Left ventricle myocardium superior (tissue), 1 donor: ENCODE measurements at regions of chr17 and their contacts with region 1.

Region 1: DNA sequence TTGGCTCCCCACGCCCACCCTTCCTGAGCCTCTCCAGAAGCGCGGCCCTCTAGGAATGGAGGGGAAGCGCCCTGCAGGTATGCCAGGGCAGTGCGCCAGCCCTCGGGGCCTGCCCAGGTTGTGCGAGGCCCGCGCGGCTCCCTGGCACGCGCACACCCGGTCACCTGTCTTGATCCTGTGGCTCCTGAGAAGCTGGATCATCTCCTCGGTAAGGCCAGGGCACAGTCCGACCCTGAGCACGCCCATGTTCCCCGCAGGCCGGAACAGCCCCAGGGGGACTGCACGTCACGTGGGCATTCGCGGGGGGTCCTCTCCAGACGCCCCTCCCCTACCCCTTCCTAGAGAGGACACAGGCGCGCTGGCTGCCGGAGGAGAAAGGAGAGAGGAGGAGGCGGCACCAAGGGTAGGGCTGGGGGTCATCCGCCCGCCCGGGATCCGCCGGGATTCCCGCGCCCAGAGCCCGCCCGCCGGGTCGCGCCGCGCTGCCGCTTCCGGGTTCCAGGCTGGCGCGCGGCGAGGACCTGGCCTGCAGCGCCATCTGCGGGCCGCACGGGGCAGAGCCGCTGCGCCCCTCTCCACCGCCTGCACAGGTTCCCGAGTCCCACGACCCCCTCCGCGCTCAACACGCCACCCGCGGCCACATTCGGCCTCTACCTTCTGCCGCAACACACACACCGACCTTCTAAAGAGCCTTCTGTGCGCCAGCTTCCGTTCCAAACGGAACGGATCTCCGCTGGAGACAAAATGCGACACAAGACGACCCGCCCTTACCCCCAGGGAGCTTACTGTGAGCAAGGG is at the start of gene RAD51D:
- DNase-seq: peak; percentile 88
- ATAC-seq: peak; percentile 98
- total RNA-seq, gene RAD51D: 6.4 TPM

Region 2: GRCh38 chr17:34542700-34543336 is 576.7 kb before region 1 on chr17:
- intact Hi-C with region 1: loop called (anchors 5 kb)
- DNase-seq: no peak
- ATAC-seq: no peak

Region 3: DNA sequence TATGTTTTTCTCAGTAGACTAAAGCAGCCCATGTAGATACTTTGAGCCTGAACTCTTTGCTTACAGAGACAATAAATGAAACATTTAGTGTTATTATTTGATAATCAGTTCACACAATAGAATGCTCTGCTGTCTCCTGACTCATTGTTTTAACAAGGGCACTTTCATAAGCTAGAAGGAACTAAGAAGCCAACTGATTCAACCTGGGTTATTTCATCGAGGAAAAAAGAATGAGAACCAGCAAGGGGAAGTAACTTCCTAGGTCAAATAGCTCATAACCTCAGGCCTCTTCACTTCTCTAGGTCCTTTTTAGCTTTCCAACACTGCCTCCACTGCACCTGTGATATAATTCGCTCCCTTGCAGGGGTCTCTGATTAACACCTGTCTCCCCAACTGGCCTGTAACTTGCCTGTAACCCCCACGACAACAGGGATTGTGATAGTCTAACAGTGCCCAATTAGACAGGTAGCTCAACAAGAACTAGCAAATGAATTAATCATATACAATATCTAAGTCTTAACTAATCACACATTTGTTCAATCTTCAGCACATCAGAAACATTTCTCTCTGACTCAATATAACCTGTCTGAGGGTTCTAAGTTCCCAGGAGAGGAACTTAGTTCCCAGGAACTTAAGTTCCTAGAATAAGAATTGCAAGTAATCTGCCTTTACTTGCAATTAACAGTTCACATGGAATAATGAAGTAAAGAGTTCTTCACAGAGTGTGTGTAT is 90.9 kb before region 1 on chr17:
- intact Hi-C with region 1: no loop called
- DNase-seq: no peak
- ATAC-seq: no peak